ENCODE measurements at regions of chr11 and their contacts with region 1.

Region 1: DNA sequence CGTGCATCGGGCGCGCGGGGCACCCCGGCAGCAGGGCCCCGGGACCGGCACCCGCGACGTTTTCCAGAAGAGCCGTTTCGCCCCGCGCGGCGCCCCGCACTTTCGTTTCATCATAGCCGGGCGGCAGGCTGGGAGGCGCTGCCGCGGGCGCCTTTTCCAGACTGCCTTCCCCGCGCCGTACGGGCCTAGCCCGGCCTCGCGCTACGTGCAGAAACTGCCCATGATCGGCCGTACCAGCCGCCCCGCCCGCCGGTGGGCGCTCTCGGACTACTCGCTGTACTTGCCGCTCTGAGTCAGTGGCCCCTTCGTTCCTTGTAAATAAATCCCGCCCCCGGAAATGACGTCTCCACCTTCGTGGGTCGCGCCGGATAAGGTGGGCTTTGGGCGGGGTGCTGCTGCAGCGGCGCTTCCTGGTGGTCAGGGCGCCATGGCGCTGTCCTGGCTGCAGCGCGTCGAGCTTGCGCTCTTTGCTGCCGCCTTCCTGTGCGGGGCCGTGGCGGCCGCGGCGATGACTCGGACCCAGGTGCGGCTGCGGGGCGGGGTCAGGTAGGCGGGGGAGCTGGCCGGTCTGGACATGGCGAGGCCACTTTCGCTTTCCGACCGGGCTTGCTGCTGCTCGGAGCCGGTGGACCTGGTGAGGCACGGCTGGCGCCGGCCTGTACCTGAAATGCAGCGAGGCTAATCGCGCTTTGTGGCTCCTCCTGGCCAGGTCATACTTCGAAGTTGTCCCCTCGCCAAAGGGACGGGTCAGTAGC is at the start of gene TMEM179B:
- DNase-seq: peak; percentile 97
- H3K4me3 ChIP-seq: peak within 1 kb of the TSS; percentile 1 to 95 (median 43)
- H3K27ac ChIP-seq: peak within 1 kb of the TSS; percentile 32
- H3K4me1 ChIP-seq: peaks cover 14% of the 10 kb centered on the region
- H3K27me3 ChIP-seq: no peaks in the 10 kb centered on the region
- CTCF ChIP-seq: peak; percentile 62 to 83
- POLR2A ChIP-seq: peak; percentile 97
- total RNA-seq, gene TMEM179B: 27.6 and 27.8 TPM in 2 replicates

Region 2: DNA sequence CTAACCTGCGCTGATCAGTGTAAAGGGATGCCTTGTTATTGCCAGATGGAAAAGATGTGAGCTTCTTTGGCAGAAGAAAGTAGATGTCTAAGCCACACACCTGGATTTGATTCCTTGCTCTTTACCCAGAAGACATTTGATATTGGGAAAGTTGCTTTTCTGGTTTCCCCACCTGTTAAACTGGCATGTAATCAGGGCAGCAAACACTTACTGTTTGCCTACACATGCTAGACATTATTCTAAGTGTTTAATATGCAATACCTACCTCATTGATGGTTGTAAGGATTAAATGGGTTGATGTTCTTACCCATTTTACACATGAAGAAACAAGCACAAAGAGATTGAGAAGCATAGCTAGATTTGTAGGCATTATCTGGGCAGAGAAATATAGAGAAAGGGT is 433.3 kb before region 1 on chr11:
- CTCF ChIA-PET with region 1: no interaction called
- POLR2A ChIA-PET with region 1: no interaction called
- dilution Hi-C with region 1: no loop called
- intact Hi-C with region 1: no loop called
- DNase-seq: no peak
- H3K4me3 ChIP-seq: no peak overlapping the region
- H3K27ac ChIP-seq: no peak overlapping the region
- H3K4me1 ChIP-seq: no peaks in the 10 kb centered on the region
- H3K27me3 ChIP-seq: no peaks in the 10 kb centered on the region
- CTCF ChIP-seq: no peak
- POLR2A ChIP-seq: no peak

Region 3: GRCh38 chr11:62716816-62717215 is 70.4 kb before region 1 on chr11:
- CTCF ChIA-PET with region 1: no interaction called
- POLR2A ChIA-PET with region 1: no interaction called
- dilution Hi-C with region 1: no loop called
- intact Hi-C with region 1: no loop called
- DNase-seq: no peak
- H3K4me3 ChIP-seq: no peak overlapping the region
- H3K27ac ChIP-seq: no peak overlapping the region
- H3K4me1 ChIP-seq: no peaks in the 10 kb centered on the region
- H3K27me3 ChIP-seq: no peaks in the 10 kb centered on the region
- CTCF ChIP-seq: no peak
- POLR2A ChIP-seq: no peak

Region 4: GRCh38 chr11:62726915-62727763 is 60.0 kb before region 1 on chr11 and contains the start of gene HNRNPUL2:
- CTCF ChIA-PET with region 1: interaction called, 39 read pairs
- POLR2A ChIA-PET with region 1: no interaction called
- dilution Hi-C with region 1: no loop called
- intact Hi-C with region 1: loop called (anchors 1 kb)
- DNase-seq: peak; percentile 99
- H3K4me3 ChIP-seq: peak within 1 kb of the TSS; percentile 71 to 99 (median 94)
- H3K27ac ChIP-seq: peak within 1 kb of the TSS; percentile 67
- H3K4me1 ChIP-seq: peaks cover 15% of the 10 kb centered on the region
- H3K27me3 ChIP-seq: no peaks in the 10 kb centered on the region
- CTCF ChIP-seq: no peak
- POLR2A ChIP-seq: peak; percentile 92
- total RNA-seq, gene HNRNPUL2: 53.4 and 56.2 TPM in 2 replicates

Region 5: GRCh38 chr11:62737196-62737595 is 50.0 kb before region 1 on chr11:
- CTCF ChIA-PET with region 1: no interaction called
- POLR2A ChIA-PET with region 1: no interaction called
- dilution Hi-C with region 1: no loop called
- intact Hi-C with region 1: no loop called
- DNase-seq: no peak
- H3K4me3 ChIP-seq: no peak overlapping the region
- H3K27ac ChIP-seq: no peak overlapping the region
- H3K4me1 ChIP-seq: no peaks in the 10 kb centered on the region
- H3K27me3 ChIP-seq: no peaks in the 10 kb centered on the region
- CTCF ChIP-seq: no peak
- POLR2A ChIP-seq: no peak

Region 6: GRCh38 chr11:62771144-62772021 is 15.8 kb before region 1 on chr11 and contains the start of gene TAF6L:
- CTCF ChIA-PET with region 1: interaction called, 42 read pairs
- POLR2A ChIA-PET with region 1: interaction called, 3 read pairs
- dilution Hi-C with region 1: no loop called
- intact Hi-C with region 1: loop called (anchors 1 kb)
- DNase-seq: peak; percentile 96
- H3K4me3 ChIP-seq: peak within 1 kb of the TSS; percentile 4 to 53 (median 48)
- H3K27ac ChIP-seq: peak within 1 kb of the TSS; percentile 39
- H3K4me1 ChIP-seq: peaks cover 11% of the 10 kb centered on the region
- H3K27me3 ChIP-seq: no peaks in the 10 kb centered on the region
- CTCF ChIP-seq: no peak
- POLR2A ChIP-seq: peak; percentile 74
- total RNA-seq, gene TAF6L: 28.9 and 30.4 TPM in 2 replicates

Region 7: GRCh38 chr11:62805076-62805892 is 18.1 kb after region 1 on chr11 and contains the start of gene NXF1:
- CTCF ChIA-PET with region 1: interaction called, 25 read pairs
- POLR2A ChIA-PET with region 1: interaction called, 3 read pairs
- dilution Hi-C with region 1: no loop called
- intact Hi-C with region 1: loop called (anchors 1 kb)
- DNase-seq: peak; percentile 97
- H3K4me3 ChIP-seq: peak within 1 kb of the TSS; percentile 70 to 93 (median 80)
- H3K27ac ChIP-seq: peak within 1 kb of the TSS; percentile 57
- H3K4me1 ChIP-seq: peaks cover 22% of the 10 kb centered on the region
- H3K27me3 ChIP-seq: no peaks in the 10 kb centered on the region
- CTCF ChIP-seq: peak in 1 of 2 donors; percentile 11
- POLR2A ChIP-seq: peak; percentile 100
- total RNA-seq, gene NXF1: 71.4 and 74.4 TPM in 2 replicates

Region 8: DNA sequence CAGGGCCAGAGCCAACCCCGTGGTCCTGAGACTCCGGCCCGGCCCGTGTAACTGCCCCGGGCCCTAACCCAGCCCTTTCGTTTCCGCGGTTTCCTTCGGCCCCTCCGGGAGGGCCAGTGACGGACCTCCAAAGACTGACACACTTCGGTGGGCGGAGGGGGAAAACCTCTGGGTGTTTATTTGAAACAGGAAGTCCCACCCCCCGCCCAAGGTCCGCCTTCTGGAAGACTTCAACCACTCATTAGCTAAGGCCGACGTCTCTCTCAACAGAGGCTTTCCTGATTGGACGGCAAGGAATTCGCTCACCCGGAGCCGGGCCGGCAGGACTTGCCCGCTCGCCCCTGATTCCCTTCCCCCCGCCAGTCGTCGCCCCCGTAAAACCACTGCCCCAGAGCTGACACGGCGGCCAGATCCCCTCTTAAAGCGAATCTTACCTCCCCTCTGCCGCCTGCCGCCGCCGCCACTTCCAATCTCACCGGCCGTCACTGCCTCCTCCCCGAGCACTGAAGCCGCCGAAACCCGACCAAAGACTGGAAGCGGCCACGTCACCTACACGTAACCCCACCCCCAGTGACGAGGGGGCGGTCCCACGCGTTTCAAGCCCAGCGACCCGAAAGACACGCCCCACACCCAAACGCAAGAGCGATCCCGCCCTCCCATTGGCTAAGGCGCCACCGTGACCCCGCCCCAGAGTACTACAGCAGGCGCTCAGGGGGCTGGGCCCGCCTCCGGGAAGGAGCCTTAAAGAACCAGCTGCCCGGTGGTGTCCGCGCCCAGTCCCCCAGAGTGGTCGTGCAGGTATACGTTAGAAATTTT is 44.5 kb after region 1 on chr11 and contains the start of gene STX5:
- CTCF ChIA-PET with region 1: interaction called, 17 read pairs
- POLR2A ChIA-PET with region 1: interaction called, 5 read pairs
- dilution Hi-C with region 1: no loop called
- intact Hi-C with region 1: loop called (anchors 1 kb)
- DNase-seq: peak; percentile 99
- H3K4me3 ChIP-seq: peak within 1 kb of the TSS; percentile 62 to 82 (median 75)
- H3K27ac ChIP-seq: peak within 1 kb of the TSS; percentile 76
- H3K4me1 ChIP-seq: peaks cover 13% of the 10 kb centered on the region
- H3K27me3 ChIP-seq: no peaks in the 10 kb centered on the region
- CTCF ChIP-seq: no peak
- POLR2A ChIP-seq: peak; percentile 97
- total RNA-seq, gene STX5: 41.3 and 42.8 TPM in 2 replicates

Region 9: DNA sequence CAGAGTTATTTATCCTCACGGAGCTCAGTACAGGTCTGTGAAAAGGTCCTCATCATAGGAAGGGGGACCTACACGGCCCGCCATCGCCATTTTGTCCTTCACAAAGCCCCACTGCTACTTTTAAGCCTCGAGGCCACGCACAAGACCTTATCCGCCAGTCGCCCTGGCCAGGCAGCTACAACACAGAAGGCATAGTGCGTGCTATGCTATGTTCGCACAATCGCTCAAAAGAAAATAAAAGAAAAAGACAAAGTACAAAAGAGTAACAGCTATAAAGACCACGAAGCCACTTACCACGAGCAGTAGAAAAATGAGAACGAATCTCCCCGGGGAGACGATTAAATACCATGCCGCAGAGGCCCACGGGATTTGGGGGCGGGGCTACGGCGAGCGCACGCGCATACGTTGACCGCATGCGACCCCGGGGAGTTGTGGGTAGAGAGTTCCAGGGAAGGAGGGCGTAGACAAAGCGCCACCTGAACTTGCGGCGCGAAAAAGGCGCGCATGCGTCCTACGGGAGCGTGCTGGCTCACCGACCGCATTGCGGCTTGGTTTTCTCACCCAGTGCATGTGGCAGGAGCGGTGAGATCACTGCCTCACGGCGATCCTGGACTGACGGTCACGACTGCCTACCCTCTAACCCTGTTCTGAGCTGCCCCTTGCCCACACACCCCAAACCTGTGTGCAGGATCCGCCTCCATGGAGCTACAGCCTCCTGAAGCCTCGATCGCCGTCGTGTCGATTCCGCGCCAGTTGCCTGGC is 68.6 kb after region 1 on chr11:
- CTCF ChIA-PET with region 1: interaction called, 105 read pairs
- POLR2A ChIA-PET with region 1: interaction called, 9 read pairs
- dilution Hi-C with region 1: no loop called
- intact Hi-C with region 1: no loop called
- DNase-seq: peak; percentile 98
- H3K4me3 ChIP-seq: peak overlapping the region; percentile 61 to 94 (median 87)
- H3K27ac ChIP-seq: peak overlapping the region; percentile 54
- H3K4me1 ChIP-seq: peaks cover 24% of the 10 kb centered on the region
- H3K27me3 ChIP-seq: no peaks in the 10 kb centered on the region
- CTCF ChIP-seq: no peak
- POLR2A ChIP-seq: peak; percentile 100

Region 10: DNA sequence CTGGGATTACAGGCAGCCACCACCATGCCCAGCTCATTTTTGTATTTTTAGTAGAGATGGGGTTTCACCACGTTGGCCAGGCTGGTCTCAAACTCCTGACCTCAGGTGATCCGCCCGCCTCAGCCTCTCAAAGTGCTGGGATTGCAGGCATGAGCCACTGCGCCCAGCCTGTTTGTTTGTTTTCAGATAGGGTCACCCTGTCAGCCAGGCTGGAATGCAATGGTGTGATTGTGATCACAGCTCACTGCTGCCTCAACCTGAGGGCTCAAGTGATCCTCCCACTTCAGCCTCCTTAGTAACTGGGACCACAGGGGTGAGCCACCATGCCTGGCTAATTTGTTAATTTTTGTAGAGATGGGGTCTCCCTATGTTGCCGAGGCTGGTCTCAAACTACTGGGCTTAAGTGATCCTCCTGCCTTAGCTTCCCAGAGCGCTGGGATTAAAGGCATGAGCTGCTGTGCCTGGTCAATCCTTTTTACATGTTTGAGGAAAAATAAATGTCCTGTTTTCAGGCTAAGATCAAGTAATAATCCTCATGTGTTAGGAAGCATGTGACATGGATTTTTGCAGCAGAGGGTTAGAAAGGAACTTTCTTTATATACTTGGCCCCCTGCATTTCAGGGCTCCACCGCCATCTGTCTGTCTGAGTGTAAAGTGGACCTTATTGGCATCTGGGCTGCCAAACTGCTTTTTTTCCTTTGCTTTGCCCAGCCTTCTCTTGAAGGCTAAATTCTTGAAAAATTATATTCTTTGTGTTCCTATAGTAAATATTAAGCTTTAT is 88.7 kb after region 1 on chr11:
- CTCF ChIA-PET with region 1: interaction called, 36 read pairs
- POLR2A ChIA-PET with region 1: interaction called, 10 read pairs
- dilution Hi-C with region 1: no loop called
- intact Hi-C with region 1: loop called (anchors 1 kb)
- DNase-seq: no peak
- H3K4me3 ChIP-seq: no peak overlapping the region
- H3K27ac ChIP-seq: no peak overlapping the region
- H3K4me1 ChIP-seq: peaks cover 12% of the 10 kb centered on the region
- H3K27me3 ChIP-seq: no peaks in the 10 kb centered on the region
- CTCF ChIP-seq: no peak
- POLR2A ChIP-seq: no peak

Region 11: DNA sequence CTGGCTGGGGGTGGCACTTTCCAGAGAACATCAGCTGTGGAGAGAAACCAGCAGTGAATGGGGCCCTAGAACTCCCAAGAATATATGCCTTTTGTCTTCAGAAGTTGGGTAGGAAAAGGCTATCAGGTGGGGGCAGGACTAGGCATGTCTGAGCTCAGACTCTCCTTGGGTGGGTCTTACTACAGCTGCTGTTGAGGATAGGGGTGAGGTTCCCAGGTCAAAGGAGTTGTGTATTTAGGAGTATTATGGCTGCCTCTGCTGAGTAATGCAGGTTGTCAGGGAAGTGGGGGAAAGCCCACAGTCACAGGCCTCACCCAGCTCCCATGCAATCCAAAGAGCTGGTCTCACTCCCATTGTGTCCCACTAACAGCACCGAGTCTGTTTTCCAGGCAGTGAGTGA is 608.5 kb after region 1 on chr11:
- CTCF ChIA-PET with region 1: no interaction called
- POLR2A ChIA-PET with region 1: no interaction called
- dilution Hi-C with region 1: no loop called
- intact Hi-C with region 1: no loop called
- DNase-seq: no peak
- H3K4me3 ChIP-seq: no peak overlapping the region
- H3K27ac ChIP-seq: no peak overlapping the region
- H3K4me1 ChIP-seq: no peaks in the 10 kb centered on the region
- H3K27me3 ChIP-seq: peaks cover 0 to 5% of the 10 kb centered on the region in 2 experiments
- CTCF ChIP-seq: no peak
- POLR2A ChIP-seq: no peak